ENCODE measurements at regions of chr14 and their contacts with region 1.

Region 1: DNA sequence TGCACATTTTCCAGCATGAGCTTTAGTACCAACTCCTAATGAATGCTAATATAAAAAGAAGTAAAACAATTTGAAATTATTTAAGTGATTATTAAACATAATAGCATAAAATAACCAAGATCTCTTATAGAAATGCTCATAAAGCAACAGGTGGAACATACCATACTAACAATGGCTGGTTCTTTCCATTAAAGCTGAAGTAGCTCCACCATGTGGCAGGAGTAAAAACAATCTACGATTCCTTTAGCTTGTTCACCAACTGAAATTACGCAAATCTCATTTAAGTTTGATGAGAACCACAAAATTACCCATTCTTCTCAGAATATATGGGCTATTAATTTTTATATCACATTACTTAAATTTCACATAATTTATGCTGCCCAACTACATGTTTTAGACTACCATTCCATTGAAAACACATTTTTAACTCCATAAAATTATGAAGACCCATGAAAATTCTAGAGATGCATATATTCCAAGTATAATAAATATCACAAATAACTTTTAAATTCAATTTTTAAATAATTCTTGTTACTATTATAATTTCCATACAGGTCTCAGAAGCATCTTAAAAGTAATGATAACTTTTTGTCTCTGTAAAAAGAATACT is 213.6 kb downstream of the DAD1 start:
- DNase-seq: peak; percentile 81
- H3K4me3 ChIP-seq: no peak overlapping the region
- H3K27ac ChIP-seq: no peak overlapping the region
- H3K4me1 ChIP-seq: peaks cover 3% of the 10 kb centered on the region
- CTCF ChIP-seq: peak; percentile 97

Region 2: DNA sequence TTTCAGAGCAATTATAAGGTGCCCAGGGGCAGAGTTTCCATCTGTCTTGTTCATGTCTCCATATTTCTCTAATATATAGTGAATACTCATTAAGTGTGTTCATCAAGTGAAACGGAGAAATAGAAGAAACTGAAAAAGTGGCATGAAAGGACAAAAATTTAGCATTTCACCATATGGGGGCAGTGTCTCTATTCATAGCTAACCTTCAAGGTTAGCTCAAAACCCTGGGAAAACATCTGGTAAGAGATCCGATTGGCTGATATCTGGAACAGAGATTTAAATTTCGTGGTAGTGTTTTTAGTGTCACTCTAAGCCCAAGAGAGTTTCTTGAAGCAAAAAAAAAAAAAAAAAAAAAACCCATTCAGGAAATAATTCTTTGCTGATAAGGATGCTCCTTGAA is 153.9 kb before region 1 on chr14:
- CTCF ChIA-PET with region 1: no interaction called
- POLR2A ChIA-PET with region 1: no interaction called
- intact Hi-C with region 1: loop called (anchors 2 kb)
- DNase-seq: peak; percentile 43
- H3K4me3 ChIP-seq: no peak overlapping the region
- H3K27ac ChIP-seq: no peak overlapping the region
- H3K4me1 ChIP-seq: no peaks in the 10 kb centered on the region
- CTCF ChIP-seq: peak; percentile 82

Region 3: DNA sequence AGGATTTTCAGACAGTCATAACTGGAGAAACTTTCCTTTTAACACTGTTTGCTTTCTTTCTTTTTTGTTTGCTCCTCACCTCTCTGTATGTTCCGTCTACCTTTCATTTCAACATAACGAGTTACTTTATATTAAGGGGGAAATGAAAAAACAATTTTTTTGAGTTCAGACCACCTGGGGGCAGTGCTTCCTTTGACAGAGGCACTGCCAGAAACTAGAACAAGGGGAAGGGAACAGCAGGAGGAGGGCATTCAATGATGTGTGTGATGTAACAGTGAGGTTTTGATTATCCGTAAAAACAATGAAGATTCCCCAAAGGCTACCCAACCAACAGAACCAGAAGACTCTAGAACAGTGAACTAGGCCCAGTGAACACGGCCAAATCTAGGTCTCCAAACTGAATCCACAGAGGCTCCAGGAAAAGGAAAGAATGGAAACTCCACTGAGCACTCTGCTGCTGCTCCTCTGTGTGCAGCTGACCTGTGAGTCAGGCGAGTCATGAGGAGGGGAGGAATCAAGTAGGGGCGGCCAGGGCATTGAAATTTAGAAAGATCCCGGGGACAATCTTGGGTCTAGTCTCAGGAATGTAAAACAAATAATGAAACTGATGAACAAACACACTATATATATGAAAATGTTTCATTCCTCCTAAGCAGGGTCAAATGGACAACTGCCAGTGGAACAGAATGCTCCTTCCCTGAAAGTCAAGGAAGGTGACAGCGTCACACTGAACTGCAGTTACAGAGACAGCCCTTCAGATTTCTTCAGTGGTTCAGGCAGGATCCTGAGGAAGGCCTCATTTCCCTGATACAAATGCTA is 109.9 kb before region 1 on chr14:
- CTCF ChIA-PET with region 1: no interaction called
- POLR2A ChIA-PET with region 1: interaction called, 4 read pairs
- intact Hi-C with region 1: loop called (anchors 1 kb)
- DNase-seq: peak; percentile 64
- H3K4me3 ChIP-seq: no peak overlapping the region
- H3K27ac ChIP-seq: no peak overlapping the region
- H3K4me1 ChIP-seq: peaks cover 15% of the 10 kb centered on the region
- CTCF ChIP-seq: peak; percentile 92

Region 4: GRCh38 chr14:22319526-22320361 is 55.7 kb before region 1 on chr14:
- CTCF ChIA-PET with region 1: interaction called, 3 read pairs
- POLR2A ChIA-PET with region 1: interaction called, 5 read pairs
- intact Hi-C with region 1: loop called (anchors 2 kb)
- DNase-seq: peak; percentile 77
- H3K4me3 ChIP-seq: no peak overlapping the region
- H3K27ac ChIP-seq: no peak overlapping the region
- H3K4me1 ChIP-seq: peaks cover under 1% of the 10 kb centered on the region
- CTCF ChIP-seq: peak; percentile 94

Region 5: GRCh38 chr14:22994762-22995275 is 619.4 kb after region 1 on chr14:
- CTCF ChIA-PET with region 1: no interaction called
- POLR2A ChIA-PET with region 1: interaction called, 10 read pairs
- intact Hi-C with region 1: no loop called
- DNase-seq: peak; percentile 60
- H3K4me3 ChIP-seq: no peak overlapping the region
- H3K27ac ChIP-seq: no peak overlapping the region
- H3K4me1 ChIP-seq: peaks cover 4% of the 10 kb centered on the region
- CTCF ChIP-seq: peak; percentile 87